Activated T-helper 1 cell treated with anti-CD3 and anti-CD28 coated beads, Interleukin-12 subunit alpha, Interleukin-12 subunit beta, Interleukin-2, Interleukin-4 antibody, amounts not matched to agents 30 ng/mL and 10 ng/mL and 1 ng/mL, durations not matched to agents 14 hours and 24 hours and 36 hours (primary cell): ENCODE measurements at regions of chr5 and their contacts with region 1.

Region 1: DNA sequence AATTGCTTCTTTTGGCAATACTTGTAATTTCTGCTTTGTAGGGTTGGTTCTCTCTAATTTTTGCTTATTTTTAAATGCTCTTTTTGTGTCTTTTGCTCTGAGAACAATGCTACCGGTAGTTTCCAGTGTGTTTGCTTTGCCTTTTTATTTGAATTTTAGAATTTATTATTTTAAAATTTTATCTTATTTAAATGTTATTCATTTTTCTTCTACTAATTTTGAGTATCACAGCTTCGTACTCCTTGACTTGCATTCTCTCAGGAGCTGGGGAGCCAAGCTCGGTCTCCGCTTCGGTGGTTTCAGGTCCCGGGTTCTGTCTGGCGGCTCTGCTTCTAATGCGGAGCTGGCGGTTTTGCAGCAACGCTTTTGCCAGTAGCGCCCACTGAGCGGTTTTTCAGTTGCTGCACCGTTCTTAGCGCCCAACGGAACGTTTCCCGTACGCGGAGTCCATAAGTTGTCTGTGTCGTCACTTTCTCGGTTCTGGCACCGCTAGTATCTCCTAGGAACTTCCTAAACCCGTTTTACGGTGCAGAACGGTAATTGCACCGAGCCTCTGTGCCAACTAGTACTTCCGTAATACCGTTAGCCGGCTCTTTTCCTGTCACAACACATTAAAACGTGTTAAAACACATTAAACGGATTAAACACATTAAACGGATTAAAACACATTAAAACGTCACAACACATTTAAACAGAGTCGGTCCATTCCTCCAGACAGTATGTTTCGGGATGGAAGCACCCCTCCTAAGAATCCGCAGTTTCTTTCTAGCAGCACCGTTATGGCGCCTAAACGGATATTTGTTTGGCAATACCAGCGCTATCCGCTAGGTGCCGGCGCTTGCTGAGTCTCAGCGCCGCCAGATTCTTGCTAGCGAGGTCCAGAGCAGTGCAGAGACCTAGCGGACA is 45.6 kb downstream of the ANXA2R start:
- DNase-seq: peak; percentile 84
- H3K4me3 Mint-ChIP-seq: peak overlapping the region; percentile 98
- H3K27ac Mint-ChIP-seq: peak overlapping the region; percentile 100
- H3K4me1 Mint-ChIP-seq: peaks cover 60% of the 10 kb centered on the region
- H3K27me3 Mint-ChIP-seq: peaks cover 3% of the 10 kb centered on the region

Region 2: DNA sequence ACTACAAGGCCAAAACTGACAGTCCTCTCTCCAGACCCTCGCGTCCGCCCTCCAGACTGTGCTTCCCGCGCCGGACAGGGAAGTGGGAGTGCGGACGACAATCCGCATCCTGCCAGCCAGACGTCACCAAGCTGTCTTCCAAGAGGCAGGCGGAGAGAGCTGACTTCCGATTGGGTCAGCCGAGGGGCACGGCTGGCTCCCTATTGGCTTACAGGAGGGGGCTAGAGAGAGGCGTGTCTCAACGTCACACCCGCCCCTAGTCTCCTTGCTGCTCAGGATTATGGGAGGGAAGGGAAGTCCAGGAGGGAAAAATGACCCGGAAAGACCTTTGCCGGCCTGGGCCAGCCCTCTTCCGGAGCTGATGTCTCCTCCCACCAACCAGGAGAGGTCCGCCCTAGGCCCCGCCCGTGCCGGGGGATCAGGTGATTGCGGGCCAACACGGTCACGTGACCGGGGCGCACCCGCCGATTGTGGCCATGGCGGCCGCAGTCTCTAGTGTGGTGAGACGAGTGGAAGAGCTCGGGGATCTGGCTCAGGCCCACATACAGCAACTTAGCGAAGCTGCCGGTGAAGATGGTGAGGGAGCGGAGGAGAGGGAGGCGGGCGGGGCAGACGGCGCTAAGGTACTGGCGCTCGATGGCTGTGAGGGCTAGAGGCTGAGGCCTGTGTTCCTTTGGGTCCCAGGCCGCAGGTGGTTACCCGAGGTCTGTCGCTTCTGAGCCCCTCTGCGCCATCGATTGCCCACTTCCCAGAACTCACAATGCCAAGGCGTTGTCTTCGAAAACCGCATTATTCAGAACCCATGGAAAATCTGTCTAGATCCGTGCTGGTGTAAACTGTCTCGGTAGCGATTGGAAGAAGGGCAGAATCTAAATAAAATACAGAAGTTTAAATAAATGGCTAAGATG is 1090.4 kb before region 1 on chr5 and contains the start of gene RIMOC1:
- intact Hi-C with region 1: loop called (anchors 2 kb)
- DNase-seq: peak; percentile 98
- H3K4me3 Mint-ChIP-seq: peak within 1 kb of the TSS; percentile 99
- H3K27ac Mint-ChIP-seq: peak within 1 kb of the TSS; percentile 100
- H3K4me1 Mint-ChIP-seq: peaks cover 54% of the 10 kb centered on the region
- H3K27me3 Mint-ChIP-seq: peaks cover 10% of the 10 kb centered on the region
- total RNA-seq, gene RIMOC1: 28.0 and 29.0 TPM in 2 replicates

Region 3: DNA sequence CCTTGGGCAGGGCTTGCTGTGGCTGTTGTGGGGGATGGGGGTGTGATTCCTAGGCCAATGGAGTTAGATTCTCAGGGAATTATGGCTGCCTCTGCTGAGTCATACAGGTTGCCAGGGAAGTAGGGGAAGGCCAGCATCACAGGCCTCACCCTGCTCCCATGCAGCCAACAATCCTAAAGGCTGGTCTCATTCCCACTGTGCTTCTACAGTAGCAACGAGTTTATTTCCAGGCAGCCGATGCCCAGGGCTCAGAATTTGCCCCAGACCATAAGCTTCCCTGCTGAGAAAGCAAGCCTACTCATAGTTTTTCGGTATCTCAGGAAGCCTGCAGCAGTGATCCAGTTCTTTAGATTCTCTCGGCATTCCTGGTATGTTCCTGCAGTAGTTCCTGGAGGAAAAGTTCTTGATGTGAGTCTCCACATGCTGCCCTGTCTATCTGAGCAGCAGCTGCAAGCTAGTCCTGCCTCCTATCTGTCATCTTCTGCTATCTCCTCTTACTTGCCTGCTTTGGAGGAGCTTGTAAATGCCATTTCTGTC is 123.5 kb before region 1 on chr5:
- intact Hi-C with region 1: no loop called
- DNase-seq: no peak
- H3K4me3 Mint-ChIP-seq: no peak overlapping the region
- H3K27ac Mint-ChIP-seq: no peak overlapping the region
- H3K4me1 Mint-ChIP-seq: peaks cover 6% of the 10 kb centered on the region
- H3K27me3 Mint-ChIP-seq: peaks cover 2% of the 10 kb centered on the region

Region 4: DNA sequence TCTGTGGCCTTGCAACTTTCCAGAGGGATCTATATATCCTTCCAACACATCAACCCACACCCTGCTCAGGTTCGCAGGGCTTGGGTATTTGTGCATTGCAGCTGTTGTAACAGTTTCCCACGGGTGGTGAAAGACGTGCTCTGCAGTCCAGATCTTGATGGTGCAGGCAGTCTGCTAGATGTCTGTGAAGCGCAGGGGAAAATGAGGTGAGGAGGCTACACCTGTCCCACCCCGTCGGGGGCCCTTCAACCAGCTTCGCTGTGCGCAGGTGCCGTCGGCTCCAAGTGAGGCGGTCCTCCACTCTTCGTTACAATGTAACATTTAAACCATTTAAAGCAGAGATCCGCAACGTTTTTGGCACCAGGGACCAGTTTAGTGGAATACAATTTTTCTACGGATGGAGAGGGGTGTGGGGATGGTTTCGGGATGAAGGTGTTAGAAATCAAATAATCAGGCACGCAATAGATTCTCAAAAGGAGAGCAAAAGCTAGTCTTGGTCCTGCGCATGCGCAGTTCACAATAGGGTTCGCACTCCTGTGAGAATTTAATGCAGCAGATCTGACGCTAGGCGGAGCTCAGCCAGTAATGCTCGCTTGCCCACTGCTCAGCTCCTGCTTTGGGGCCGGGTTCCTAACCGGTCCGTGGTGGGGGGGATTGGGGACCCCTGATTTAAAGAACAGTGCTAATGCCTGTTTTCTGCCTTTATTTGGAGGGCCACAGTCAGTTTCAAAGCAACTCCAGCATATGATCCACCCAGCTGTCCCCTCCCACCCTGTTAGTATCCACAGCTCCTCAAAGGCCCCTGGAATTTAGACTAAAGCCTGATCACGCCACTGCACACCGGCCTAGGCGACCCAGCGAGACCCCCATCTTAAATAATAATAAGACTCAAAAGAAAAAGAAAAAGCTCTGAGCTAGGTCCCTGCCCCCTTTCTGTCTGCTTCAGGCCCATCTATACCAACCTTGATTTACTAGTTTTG is 85.7 kb before region 1 on chr5:
- intact Hi-C with region 1: loop called (anchors 1 kb)
- DNase-seq: peak; percentile 84
- H3K4me3 Mint-ChIP-seq: peak overlapping the region; percentile 81
- H3K27ac Mint-ChIP-seq: peak overlapping the region; percentile 50
- H3K4me1 Mint-ChIP-seq: peaks cover 12% of the 10 kb centered on the region
- H3K27me3 Mint-ChIP-seq: peaks cover 26% of the 10 kb centered on the region

Region 5: DNA sequence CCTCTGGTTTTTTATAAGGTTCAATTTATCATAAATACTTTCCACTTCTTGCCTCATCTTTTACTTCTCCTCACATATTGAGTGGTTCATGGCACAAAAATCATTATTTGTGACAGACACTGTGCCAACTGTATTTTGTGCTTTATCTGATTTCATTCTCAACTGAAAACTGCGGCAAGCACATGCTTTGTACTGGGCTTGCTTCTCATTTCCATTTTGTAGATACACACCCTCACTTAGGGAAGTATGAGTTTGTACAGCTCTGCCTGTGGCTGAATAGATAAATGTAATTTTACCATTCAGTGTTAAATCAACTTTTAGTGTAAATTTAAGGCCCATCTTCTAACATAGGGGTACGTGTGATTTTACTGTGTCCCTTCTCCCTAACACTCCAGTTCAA is 37.9 kb before region 1 on chr5:
- intact Hi-C with region 1: no loop called
- DNase-seq: no peak
- H3K4me3 Mint-ChIP-seq: no peak overlapping the region
- H3K27ac Mint-ChIP-seq: no peak overlapping the region
- H3K4me1 Mint-ChIP-seq: peaks cover 12% of the 10 kb centered on the region
- H3K27me3 Mint-ChIP-seq: peaks cover 5% of the 10 kb centered on the region

Region 6: GRCh38 chr5:42970636-42971559 is 23.6 kb before region 1 on chr5:
- intact Hi-C with region 1: loop called (anchors 2 kb)
- DNase-seq: no peak
- H3K4me3 Mint-ChIP-seq: no peak overlapping the region
- H3K27ac Mint-ChIP-seq: no peak overlapping the region
- H3K4me1 Mint-ChIP-seq: peaks cover 5% of the 10 kb centered on the region
- H3K27me3 Mint-ChIP-seq: no peaks in the 10 kb centered on the region

Region 7: GRCh38 chr5:43019614-43020293 is 25.3 kb after region 1 on chr5:
- intact Hi-C with region 1: loop called (anchors 1 kb)
- DNase-seq: peak; percentile 83
- H3K4me3 Mint-ChIP-seq: peak overlapping the region; percentile 90
- H3K27ac Mint-ChIP-seq: peak overlapping the region; percentile 97
- H3K4me1 Mint-ChIP-seq: peaks cover 43% of the 10 kb centered on the region
- H3K27me3 Mint-ChIP-seq: no peaks in the 10 kb centered on the region

Region 8: GRCh38 chr5:43040287-43041098 is 46.0 kb after region 1 on chr5 and contains the start of gene ANXA2R:
- intact Hi-C with region 1: loop called (anchors 1 kb)
- DNase-seq: peak; percentile 93
- H3K4me3 Mint-ChIP-seq: peak within 1 kb of the TSS; percentile 82
- H3K27ac Mint-ChIP-seq: peak within 1 kb of the TSS; percentile 86
- H3K4me1 Mint-ChIP-seq: peaks cover 59% of the 10 kb centered on the region
- H3K27me3 Mint-ChIP-seq: no peaks in the 10 kb centered on the region
- total RNA-seq, gene ANXA2R: 0.88 and 0.93 TPM in 2 replicates

Region 9: GRCh38 chr5:43073597-43074546 is 79.4 kb after region 1 on chr5:
- intact Hi-C with region 1: no loop called
- DNase-seq: peak; percentile 42
- H3K4me3 Mint-ChIP-seq: no peak overlapping the region
- H3K27ac Mint-ChIP-seq: peak overlapping the region; percentile 41
- H3K4me1 Mint-ChIP-seq: peaks cover 45% of the 10 kb centered on the region
- H3K27me3 Mint-ChIP-seq: no peaks in the 10 kb centered on the region

Region 10: DNA sequence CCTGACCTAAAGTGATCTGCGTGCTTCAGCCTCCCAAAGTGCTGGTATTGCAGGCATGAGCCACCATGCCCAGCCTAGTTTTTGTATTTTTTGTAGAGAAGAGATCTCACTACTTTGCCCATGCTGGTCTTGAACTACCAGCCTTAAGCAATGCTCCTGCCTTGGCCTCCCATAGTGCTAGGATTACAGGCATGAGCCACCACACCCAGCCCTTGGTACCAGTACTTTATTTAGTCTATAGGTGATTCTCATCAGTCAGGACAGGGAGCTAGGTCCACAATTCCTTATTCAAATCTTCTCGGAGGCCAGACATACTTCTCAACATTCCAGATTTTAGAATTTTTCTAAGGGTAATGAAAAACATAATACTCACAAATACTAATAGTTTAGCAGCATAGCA is 134.7 kb after region 1 on chr5:
- intact Hi-C with region 1: no loop called
- DNase-seq: no peak
- H3K4me3 Mint-ChIP-seq: no peak overlapping the region
- H3K27ac Mint-ChIP-seq: no peak overlapping the region
- H3K4me1 Mint-ChIP-seq: peaks cover 41% of the 10 kb centered on the region
- H3K27me3 Mint-ChIP-seq: no peaks in the 10 kb centered on the region

Region 11: GRCh38 chr5:43396762-43397304 is 402.3 kb after region 1 on chr5:
- intact Hi-C with region 1: loop called (anchors 5 kb)
- DNase-seq: peak; percentile 62
- H3K4me3 Mint-ChIP-seq: peak overlapping the region; percentile 87
- H3K27ac Mint-ChIP-seq: peak overlapping the region; percentile 88
- H3K4me1 Mint-ChIP-seq: peaks cover 12% of the 10 kb centered on the region
- H3K27me3 Mint-ChIP-seq: peaks cover 2% of the 10 kb centered on the region